GM23248 (cell line): ENCODE measurements at regions of chr6 and their contacts with region 1.

Region 1: DNA sequence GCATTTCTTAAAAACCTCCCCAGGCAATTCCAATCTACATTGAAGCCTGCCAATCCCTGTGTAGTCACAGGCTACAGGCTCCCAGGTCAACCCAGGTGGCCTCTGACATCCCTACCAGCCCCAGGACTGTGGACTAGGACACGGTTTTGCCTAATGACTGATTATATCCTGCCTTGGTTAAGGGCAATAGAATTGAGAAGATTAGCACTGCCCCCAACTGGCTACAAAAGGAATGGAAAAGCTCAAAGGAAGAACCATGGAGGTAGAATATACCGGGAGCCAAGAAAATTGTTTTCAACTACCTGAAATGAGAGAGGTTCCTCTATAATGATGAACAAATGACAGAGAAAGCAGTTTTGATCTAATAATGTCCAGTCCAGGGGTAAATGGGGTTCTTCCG is 421.1 kb upstream of the AGPAT4 start:
- DNase-seq: peak; percentile 62
- H3K4me3 ChIP-seq: no peak overlapping the region
- H3K27ac ChIP-seq: no peak overlapping the region
- H3K4me1 ChIP-seq: no peaks in the 10 kb centered on the region
- H3K27me3 ChIP-seq: no peaks in the 10 kb centered on the region

Region 2: GRCh38 chr6:161318456-161318855 is 376.5 kb before region 1 on chr6:
- in situ Hi-C with region 1: no loop called
- DNase-seq: no peak
- H3K4me3 ChIP-seq: no peak overlapping the region
- H3K27ac ChIP-seq: no peak overlapping the region
- H3K4me1 ChIP-seq: no peaks in the 10 kb centered on the region
- H3K27me3 ChIP-seq: peaks cover 2% of the 10 kb centered on the region; the same call in 1 of the 2 replicates

Region 3: GRCh38 chr6:161393839-161394364 is 301.1 kb before region 1 on chr6:
- in situ Hi-C with region 1: loop called (anchors 10 kb)
- DNase-seq: peak; percentile 97
- H3K4me3 ChIP-seq: peak overlapping the region; percentile 55
- H3K27ac ChIP-seq: no peak overlapping the region
- H3K4me1 ChIP-seq: no peaks in the 10 kb centered on the region
- H3K27me3 ChIP-seq: no peaks in the 10 kb centered on the region

Region 4: GRCh38 chr6:161429921-161430490 is 265.0 kb before region 1 on chr6:
- in situ Hi-C with region 1: loop called (anchors 10 kb)
- DNase-seq: no peak
- H3K4me3 ChIP-seq: no peak overlapping the region
- H3K27ac ChIP-seq: no peak overlapping the region
- H3K4me1 ChIP-seq: peaks cover 14% of the 10 kb centered on the region
- H3K27me3 ChIP-seq: no peaks in the 10 kb centered on the region